WTC11 (cell line): ENCODE measurements at regions of chr22 and their contacts with region 1.

Region 1: DNA sequence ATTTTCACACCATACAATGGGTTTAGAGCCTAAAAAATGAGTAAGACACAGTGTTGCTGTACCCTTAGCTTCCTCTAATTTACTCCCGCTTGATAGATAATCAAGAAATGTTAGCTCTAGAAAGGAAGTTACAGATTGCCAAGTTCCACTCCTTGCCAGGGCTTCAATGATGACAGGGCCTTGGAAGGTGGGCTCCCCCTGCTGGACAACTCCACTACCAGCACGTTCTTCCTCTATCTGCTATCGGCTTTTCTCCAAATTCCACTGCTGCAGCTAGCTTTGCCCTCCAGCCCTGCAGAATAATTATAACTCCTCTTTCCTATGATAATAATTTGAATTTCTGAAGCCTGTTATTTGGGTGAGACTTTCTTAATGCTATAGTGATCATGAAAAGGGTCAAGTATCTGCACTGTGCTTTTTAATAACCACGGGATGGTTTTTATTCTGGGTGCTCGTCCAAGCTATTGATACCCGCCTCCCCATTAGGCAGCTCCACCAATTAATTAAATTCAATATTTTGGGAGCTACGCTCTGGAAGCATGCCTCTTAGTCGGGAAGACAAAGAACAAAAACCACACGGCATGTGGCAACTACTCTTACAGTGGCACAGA is 9.0 kb downstream of the SYN3 start:
- DNase-seq: peak; percentile 83
- ATAC-seq: peak; percentile 43
- H3K4me3 Mint-ChIP-seq: no peak overlapping the region
- H3K27ac Mint-ChIP-seq: no peak overlapping the region
- H3K4me1 Mint-ChIP-seq: peaks cover 79% of the 10 kb centered on the region
- H3K27me3 Mint-ChIP-seq: peaks cover 30% of the 10 kb centered on the region
- CTCF ChIP-seq: peak; percentile 78

Region 2: GRCh38 chr22:32776397-32777186 is 272.6 kb before region 1 on chr22:
- CTCF ChIA-PET with region 1: no interaction called
- POLR2A ChIA-PET with region 1: no interaction called
- DNase-seq: no peak
- ATAC-seq: no peak
- H3K4me3 Mint-ChIP-seq: no peak overlapping the region
- H3K27ac Mint-ChIP-seq: no peak overlapping the region
- H3K4me1 Mint-ChIP-seq: peaks cover 15% of the 10 kb centered on the region
- H3K27me3 Mint-ChIP-seq: peaks cover 5% of the 10 kb centered on the region; the same call in 1 of the 2 replicates
- CTCF ChIP-seq: no peak

Region 3: GRCh38 chr22:32994071-32994801 is 55.0 kb before region 1 on chr22:
- CTCF ChIA-PET with region 1: no interaction called
- POLR2A ChIA-PET with region 1: no interaction called
- DNase-seq: peak; percentile 29
- ATAC-seq: peak; percentile 52
- H3K4me3 Mint-ChIP-seq: no peak overlapping the region
- H3K27ac Mint-ChIP-seq: no peak overlapping the region
- H3K4me1 Mint-ChIP-seq: peaks cover 12% of the 10 kb centered on the region
- H3K27me3 Mint-ChIP-seq: no peaks in the 10 kb centered on the region
- CTCF ChIP-seq: no peak

Region 4: DNA sequence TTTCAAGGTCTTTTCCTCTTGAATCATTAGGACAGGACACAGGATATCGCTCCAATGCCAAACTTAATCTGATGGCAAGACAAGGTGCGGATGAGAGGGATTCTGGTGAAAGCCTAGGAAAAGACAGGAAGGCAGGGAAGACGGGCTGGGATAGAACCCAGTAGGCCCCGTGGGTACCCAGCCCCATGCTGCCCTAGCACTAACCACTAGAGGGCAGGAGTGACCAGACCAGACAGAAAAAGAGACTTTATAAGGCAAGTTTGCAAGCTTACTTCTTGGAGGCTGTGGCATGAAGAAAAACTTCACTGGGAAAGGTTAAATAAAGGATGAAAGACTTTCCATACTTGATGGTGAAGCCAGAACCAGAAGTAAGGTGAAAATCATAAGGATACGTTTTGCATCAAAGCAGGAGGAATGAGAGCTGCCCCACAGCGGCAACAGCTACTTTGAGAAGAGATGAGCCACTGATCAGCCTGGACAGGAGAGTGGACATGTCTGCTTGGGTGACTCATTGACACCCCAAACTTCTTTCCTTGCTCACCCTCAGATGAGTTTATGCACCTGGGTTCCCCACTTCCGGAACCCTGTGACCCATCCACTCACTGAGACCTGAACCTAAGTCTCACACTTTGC is 30.9 kb before region 1 on chr22:
- CTCF ChIA-PET with region 1: interaction called, 82 read pairs
- POLR2A ChIA-PET with region 1: interaction called, 3 read pairs
- DNase-seq: peak; percentile 87
- ATAC-seq: peak; percentile 97
- H3K4me3 Mint-ChIP-seq: no peak overlapping the region
- H3K27ac Mint-ChIP-seq: no peak overlapping the region
- H3K4me1 Mint-ChIP-seq: peaks cover 13% of the 10 kb centered on the region
- H3K27me3 Mint-ChIP-seq: no peaks in the 10 kb centered on the region
- CTCF ChIP-seq: peak; percentile 83

Region 5: GRCh38 chr22:33038131-33038772 is 11.0 kb before region 1 on chr22:
- CTCF ChIA-PET with region 1: interaction called, 41 read pairs
- POLR2A ChIA-PET with region 1: interaction called, 3 read pairs
- DNase-seq: no peak
- ATAC-seq: peak; percentile 59
- H3K4me3 Mint-ChIP-seq: no peak overlapping the region
- H3K27ac Mint-ChIP-seq: no peak overlapping the region
- H3K4me1 Mint-ChIP-seq: peaks cover 47% of the 10 kb centered on the region
- H3K27me3 Mint-ChIP-seq: peaks cover 31% of the 10 kb centered on the region
- CTCF ChIP-seq: no peak

Region 6: GRCh38 chr22:33126881-33127280 is 77.7 kb after region 1 on chr22:
- CTCF ChIA-PET with region 1: interaction called, 20 read pairs
- POLR2A ChIA-PET with region 1: interaction called, 4 read pairs
- DNase-seq: no peak
- ATAC-seq: peak; percentile 90
- H3K4me3 Mint-ChIP-seq: no peak overlapping the region
- H3K27ac Mint-ChIP-seq: no peak overlapping the region
- H3K4me1 Mint-ChIP-seq: no peaks in the 10 kb centered on the region
- H3K27me3 Mint-ChIP-seq: peaks cover 18% of the 10 kb centered on the region
- CTCF ChIP-seq: no peak